ENCODE measurements at regions of chr12 and their contacts with region 1.

Region 1: DNA sequence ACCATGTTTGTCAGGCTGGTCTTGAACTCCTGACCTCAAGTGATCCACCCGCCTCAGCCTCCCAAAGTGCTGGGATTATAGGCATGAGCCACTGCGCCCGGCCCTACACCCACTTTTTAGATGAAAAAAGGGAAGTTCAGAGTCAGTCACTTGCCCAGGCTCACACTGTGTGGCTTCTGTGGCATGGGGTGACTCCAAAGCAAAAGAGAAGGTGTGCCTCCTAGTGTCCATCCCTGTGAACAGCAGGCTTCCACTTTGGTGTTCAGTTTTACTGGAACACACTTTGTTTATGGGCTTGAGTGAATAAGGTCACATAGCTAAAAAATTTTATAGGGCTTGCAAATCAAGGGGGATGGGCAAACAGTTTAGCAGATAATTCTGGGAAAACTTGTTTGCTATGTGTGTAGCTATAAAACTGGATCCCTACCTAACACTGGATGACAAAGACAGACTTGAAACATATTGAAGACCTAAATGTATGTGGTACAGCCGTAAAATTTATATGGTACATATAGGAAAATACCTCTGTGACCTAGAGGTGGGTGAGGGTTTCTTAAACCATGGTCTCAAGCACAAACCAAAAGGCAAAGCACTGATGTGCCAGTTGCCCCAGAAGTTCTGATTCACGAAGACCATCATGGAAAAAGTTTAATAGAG is 54.9 kb downstream of the EID3 start:
- DNase-seq: peak; percentile 78
- H3K4me3 Mint-ChIP-seq: no peak overlapping the region
- H3K27ac Mint-ChIP-seq: no peak overlapping the region
- H3K4me1 Mint-ChIP-seq: peaks cover 2% of the 10 kb centered on the region
- H3K27me3 Mint-ChIP-seq: no peaks in the 10 kb centered on the region

Region 2: DNA sequence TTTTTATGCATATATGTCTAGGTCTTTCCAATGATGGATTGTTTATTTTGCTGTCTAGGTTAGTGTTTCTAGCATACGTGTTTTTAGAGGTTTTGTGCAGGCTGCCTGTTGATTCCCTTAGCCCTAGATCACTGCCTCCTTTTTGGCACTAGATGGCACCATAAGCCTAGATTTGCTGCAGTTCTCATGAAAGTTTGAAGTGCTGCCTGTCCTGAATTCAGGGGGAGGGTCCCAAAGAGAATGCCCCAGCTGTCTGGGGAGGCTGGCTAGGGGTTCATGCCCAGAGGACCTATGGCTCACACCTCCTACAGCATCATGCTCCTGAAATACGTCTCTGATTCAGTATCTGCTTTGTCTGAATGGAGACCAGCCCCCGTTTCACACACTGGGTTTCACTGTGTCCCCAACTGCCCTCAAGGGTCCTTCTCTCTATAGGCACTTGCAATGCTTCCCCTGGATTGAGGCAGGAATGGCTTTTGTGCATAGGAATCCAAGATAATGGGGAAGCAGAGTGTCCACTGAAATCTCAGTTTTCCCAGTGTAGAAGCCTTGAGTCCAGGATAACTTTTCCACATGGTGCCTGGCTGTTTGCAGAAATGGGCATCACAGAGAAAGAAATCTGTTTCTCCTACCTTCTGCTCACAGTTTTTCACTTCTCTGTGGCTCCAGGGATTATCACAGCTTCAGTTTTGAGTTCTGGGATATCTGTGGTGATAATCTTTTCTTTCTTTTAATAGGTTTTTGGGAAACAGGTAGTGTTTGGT is 157.1 kb before region 1 on chr12:
- CTCF ChIA-PET with region 1: interaction called, 40 read pairs
- POLR2A ChIA-PET with region 1: no interaction called
- DNase-seq: peak; percentile 52
- H3K4me3 Mint-ChIP-seq: no peak overlapping the region
- H3K27ac Mint-ChIP-seq: no peak overlapping the region
- H3K4me1 Mint-ChIP-seq: peaks cover 4% of the 10 kb centered on the region
- H3K27me3 Mint-ChIP-seq: peaks cover 15% of the 10 kb centered on the region